ENCODE measurements at regions of chr5 and their contacts with region 1.

Region 1: GRCh38 chr5:96113170-96113939 is 151.7 kb upstream of the ELL2 start:
- DNase-seq: no peak
- H3K4me3 Mint-ChIP-seq: no peak overlapping the region
- H3K27ac Mint-ChIP-seq: peak overlapping the region; percentile 50
- H3K4me1 Mint-ChIP-seq: peaks cover 42% of the 10 kb centered on the region
- H3K27me3 Mint-ChIP-seq: no peaks in the 10 kb centered on the region

Region 2: DNA sequence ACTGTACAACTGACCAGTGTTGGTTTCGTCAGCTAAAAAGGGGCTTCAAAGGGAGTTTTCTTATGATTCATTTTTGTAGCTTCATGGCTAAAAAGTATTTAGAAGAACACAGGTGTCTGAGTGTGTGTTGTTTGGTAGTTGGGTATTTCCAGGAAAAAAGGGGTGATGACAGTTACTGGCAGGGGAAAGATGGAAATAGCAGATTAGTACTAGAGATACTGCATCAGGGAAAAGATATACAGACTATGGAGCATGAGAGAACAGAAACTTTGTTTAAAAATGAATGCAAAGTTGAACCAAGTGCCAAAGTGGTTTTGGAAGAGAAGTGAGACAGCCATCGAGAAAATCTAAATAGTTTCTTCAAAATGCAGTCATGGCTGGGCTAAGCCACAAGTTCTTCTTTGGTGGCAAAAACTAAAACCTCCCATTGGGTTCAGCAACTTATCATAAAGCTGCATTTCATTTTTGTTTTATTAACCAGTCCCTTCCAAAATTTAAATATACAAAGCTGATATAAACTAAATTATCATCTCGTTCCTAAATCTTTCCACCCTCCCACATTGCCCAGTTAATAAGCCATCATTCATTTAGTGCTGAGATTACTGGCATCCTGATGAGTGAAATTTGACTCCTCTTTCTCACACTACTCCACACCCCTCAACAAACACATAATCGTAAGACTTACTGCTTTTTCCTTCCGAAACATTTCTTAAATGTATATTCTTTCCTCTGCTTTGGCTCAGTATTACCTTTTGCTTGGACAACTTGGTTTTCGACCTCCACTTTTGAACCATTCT is 185.2 kb before region 1 on chr5:
- intact Hi-C with region 1: loop called (anchors 2 kb)
- DNase-seq: no peak
- H3K4me3 Mint-ChIP-seq: peak overlapping the region; percentile 67
- H3K27ac Mint-ChIP-seq: peak overlapping the region; percentile 89
- H3K4me1 Mint-ChIP-seq: peaks cover 79% of the 10 kb centered on the region
- H3K27me3 Mint-ChIP-seq: no peaks in the 10 kb centered on the region

Region 3: GRCh38 chr5:96079075-96079474 is 34.3 kb before region 1 on chr5:
- intact Hi-C with region 1: loop called (anchors 1 kb)
- DNase-seq: no peak
- H3K4me3 Mint-ChIP-seq: no peak overlapping the region
- H3K27ac Mint-ChIP-seq: peak overlapping the region; percentile 73
- H3K4me1 Mint-ChIP-seq: peaks cover 53% of the 10 kb centered on the region
- H3K27me3 Mint-ChIP-seq: no peaks in the 10 kb centered on the region

Region 4: DNA sequence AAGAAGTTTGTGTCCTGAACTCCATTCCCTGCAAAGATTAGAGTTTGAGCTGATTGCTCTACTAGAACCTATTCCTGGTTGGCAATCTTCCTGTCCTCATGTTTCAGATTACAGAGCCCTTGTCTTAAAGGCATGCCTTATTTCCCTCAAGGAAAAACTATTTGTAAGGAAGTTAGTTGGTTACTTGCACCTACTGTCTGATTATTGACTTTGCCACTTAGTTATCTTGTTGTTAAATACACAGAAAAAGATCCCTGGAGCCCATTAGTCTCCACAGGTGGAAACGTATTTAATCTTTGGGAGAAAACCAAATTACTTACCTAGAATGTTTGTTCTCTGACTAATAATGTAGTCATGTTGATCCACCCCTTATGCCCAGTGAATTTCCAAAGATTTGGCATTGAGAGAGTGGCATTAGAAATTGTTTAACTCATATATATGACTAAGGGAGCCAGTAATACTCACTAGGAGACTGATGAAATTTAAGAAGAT is 19.4 kb before region 1 on chr5:
- intact Hi-C with region 1: no loop called
- DNase-seq: no peak
- H3K4me3 Mint-ChIP-seq: no peak overlapping the region
- H3K27ac Mint-ChIP-seq: no peak overlapping the region
- H3K4me1 Mint-ChIP-seq: no peaks in the 10 kb centered on the region
- H3K27me3 Mint-ChIP-seq: no peaks in the 10 kb centered on the region

Region 5: GRCh38 chr5:96220610-96221390 is 107.4 kb after region 1 on chr5:
- intact Hi-C with region 1: loop called (anchors 2 kb)
- DNase-seq: no peak
- H3K4me3 Mint-ChIP-seq: no peak overlapping the region
- H3K27ac Mint-ChIP-seq: peak overlapping the region; percentile 81
- H3K4me1 Mint-ChIP-seq: peaks cover 13% of the 10 kb centered on the region
- H3K27me3 Mint-ChIP-seq: peaks cover 1% of the 10 kb centered on the region

Measured in activated T-helper 1 cell treated with anti-CD3 and anti-CD28 coated beads, Interleukin-12 subunit alpha, Interleukin-12 subunit beta, Interleukin-2, Interleukin-4 antibody, amounts not matched to agents 30 ng/mL and 10 ng/mL and 1 ng/mL, durations not matched to agents 14 hours and 24 hours and 36 hours (primary cell).